ENCODE measurements at regions of chr2 and their contacts with region 1.

Region 1: GRCh38 chr2:161104054-161104553 is 56.1 kb upstream of the TANK start:
- DNase-seq: peak; percentile 22
- H3K4me3 Mint-ChIP-seq: no peak overlapping the region
- H3K27ac Mint-ChIP-seq: no peak overlapping the region
- H3K4me1 Mint-ChIP-seq: peaks cover 19% of the 10 kb centered on the region
- H3K27me3 Mint-ChIP-seq: no peaks in the 10 kb centered on the region

Region 2: DNA sequence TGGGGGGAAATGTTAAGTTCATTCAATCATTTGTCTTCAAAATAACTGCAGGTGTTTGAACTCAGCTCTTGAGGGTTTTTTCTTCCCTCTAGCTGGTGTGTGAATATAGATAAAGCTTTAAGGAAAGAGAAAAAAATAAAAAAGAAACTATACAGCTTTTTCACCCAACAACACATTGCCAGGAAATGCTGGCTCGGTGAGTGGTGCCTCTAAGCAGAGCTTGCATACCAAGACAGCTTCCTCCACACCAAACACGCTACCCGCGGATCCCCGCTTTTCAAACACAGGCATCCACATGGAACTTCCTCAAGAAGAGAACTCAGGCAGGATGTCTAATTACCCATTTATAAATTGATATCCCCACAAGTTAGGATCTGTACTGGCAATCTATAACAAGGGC is 13.7 kb before region 1 on chr2:
- CTCF ChIA-PET with region 1: no interaction called
- POLR2A ChIA-PET with region 1: no interaction called
- intact Hi-C with region 1: loop called (anchors 1 kb)
- DNase-seq: peak; percentile 57
- H3K4me3 Mint-ChIP-seq: peak overlapping the region; percentile 48
- H3K27ac Mint-ChIP-seq: peak overlapping the region; percentile 54
- H3K4me1 Mint-ChIP-seq: peaks cover 35% of the 10 kb centered on the region
- H3K27me3 Mint-ChIP-seq: no peaks in the 10 kb centered on the region

Region 3: GRCh38 chr2:161122772-161123530 is 18.8 kb after region 1 on chr2:
- CTCF ChIA-PET with region 1: interaction called, 4 read pairs
- POLR2A ChIA-PET with region 1: interaction called, 6 read pairs
- intact Hi-C with region 1: loop called (anchors 1 kb)
- DNase-seq: peak; percentile 62
- H3K4me3 Mint-ChIP-seq: peak overlapping the region; percentile 17
- H3K27ac Mint-ChIP-seq: peak overlapping the region; percentile 58
- H3K4me1 Mint-ChIP-seq: peaks cover 24% of the 10 kb centered on the region
- H3K27me3 Mint-ChIP-seq: no peaks in the 10 kb centered on the region

Region 4: GRCh38 chr2:161136696-161137324 is 32.7 kb after region 1 on chr2:
- CTCF ChIA-PET with region 1: interaction called, 3 read pairs
- POLR2A ChIA-PET with region 1: interaction called, 4 read pairs
- intact Hi-C with region 1: loop called (anchors 1 kb)
- DNase-seq: peak; percentile 35
- H3K4me3 Mint-ChIP-seq: peak overlapping the region; percentile 96
- H3K27ac Mint-ChIP-seq: peak overlapping the region; percentile 100
- H3K4me1 Mint-ChIP-seq: peaks cover 45% of the 10 kb centered on the region
- H3K27me3 Mint-ChIP-seq: no peaks in the 10 kb centered on the region

Measured in activated CD4-positive, alpha-beta memory T cell treated with anti-CD3 and anti-CD28 coated beads for 36 hours (primary cell).